Activated CD4-positive, alpha-beta memory T cell treated with anti-CD3 and anti-CD28 coated beads for 36 hours (primary cell): ENCODE measurements at regions of chr2 and their contacts with region 1.

Region 1: DNA sequence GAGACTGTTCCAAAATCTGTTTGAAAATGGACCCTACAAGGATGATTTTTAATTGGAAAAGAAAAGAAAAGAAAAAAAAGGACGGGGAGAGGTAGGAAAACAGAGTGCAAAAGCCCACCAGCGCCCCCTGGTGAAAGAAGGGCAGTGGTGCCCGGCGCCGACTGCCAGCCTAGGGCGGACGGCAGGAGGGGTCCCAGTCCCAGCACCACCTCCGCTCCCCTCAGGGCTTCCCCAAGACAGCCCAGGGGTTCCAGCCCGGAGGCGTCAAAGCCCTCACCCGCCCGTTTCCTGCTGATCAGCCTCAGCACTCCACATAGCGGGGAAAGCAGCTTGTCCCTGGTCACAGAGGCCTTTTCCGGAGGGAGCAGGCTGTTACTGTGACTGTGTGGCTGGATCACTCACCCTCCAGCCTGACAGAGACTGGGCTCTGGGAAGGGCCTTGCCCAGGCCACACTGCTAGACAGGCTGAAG is 213.9 kb downstream of the TFCP2L1 start:
- DNase-seq: peak; percentile 64
- H3K4me3 Mint-ChIP-seq: no peak overlapping the region
- H3K27ac Mint-ChIP-seq: no peak overlapping the region
- H3K4me1 Mint-ChIP-seq: peaks cover 2% of the 10 kb centered on the region
- H3K27me3 Mint-ChIP-seq: peaks cover 7% of the 10 kb centered on the region

Region 2: DNA sequence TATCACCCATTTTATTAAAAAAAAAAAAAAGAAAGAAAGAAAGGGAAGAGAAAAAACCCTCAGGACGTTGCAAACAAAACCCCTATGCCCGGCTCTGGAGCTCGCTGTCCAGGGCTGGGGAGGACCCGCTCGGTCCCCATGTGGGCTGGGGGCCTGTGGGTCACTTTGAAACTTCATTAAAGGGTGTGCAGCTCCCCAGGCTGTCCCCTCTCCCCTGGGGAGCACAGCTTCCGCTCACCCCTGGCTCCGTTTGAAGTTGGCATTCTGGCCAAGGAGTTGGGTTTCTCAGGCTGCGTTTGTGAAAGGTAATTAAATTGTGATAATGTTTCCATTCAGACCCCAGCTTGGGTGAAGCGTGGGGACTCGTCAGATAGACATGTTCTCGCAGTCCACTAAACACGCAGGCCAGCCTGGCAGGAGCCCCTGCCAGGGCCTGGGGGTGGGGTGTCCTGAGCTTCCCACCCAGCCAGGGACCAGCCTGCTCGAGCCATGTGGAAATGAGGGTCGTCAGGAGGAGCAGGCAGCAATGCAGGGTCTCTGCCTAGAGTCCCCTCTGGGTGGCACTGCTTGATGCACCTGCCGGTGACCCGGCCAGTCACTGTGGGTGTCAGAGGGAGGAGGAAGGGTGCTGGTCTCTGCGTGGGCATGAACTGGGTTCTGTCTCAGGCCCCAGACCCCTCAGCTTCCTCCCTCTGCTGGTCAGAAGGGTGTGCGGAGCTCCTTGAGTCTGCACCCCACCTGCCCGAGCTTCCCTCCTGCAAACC is 558.9 kb before region 1 on chr2:
- CTCF ChIA-PET with region 1: no interaction called
- POLR2A ChIA-PET with region 1: no interaction called
- intact Hi-C with region 1: no loop called
- DNase-seq: no peak
- H3K4me3 Mint-ChIP-seq: no peak overlapping the region
- H3K27ac Mint-ChIP-seq: no peak overlapping the region
- H3K4me1 Mint-ChIP-seq: no peaks in the 10 kb centered on the region
- H3K27me3 Mint-ChIP-seq: peaks cover 5% of the 10 kb centered on the region

Region 3: GRCh38 chr2:120735746-120736170 is 335.3 kb before region 1 on chr2 and contains the start of gene GLI2:
- CTCF ChIA-PET with region 1: no interaction called
- POLR2A ChIA-PET with region 1: no interaction called
- intact Hi-C with region 1: loop called (anchors 5 kb)
- DNase-seq: peak; percentile 54
- H3K4me3 Mint-ChIP-seq: no peak within 1 kb of the TSS
- H3K27ac Mint-ChIP-seq: no peak within 1 kb of the TSS
- H3K4me1 Mint-ChIP-seq: peaks cover 6% of the 10 kb centered on the region
- H3K27me3 Mint-ChIP-seq: peaks cover 53% of the 10 kb centered on the region
- total RNA-seq, gene GLI2: not detected

Region 4: DNA sequence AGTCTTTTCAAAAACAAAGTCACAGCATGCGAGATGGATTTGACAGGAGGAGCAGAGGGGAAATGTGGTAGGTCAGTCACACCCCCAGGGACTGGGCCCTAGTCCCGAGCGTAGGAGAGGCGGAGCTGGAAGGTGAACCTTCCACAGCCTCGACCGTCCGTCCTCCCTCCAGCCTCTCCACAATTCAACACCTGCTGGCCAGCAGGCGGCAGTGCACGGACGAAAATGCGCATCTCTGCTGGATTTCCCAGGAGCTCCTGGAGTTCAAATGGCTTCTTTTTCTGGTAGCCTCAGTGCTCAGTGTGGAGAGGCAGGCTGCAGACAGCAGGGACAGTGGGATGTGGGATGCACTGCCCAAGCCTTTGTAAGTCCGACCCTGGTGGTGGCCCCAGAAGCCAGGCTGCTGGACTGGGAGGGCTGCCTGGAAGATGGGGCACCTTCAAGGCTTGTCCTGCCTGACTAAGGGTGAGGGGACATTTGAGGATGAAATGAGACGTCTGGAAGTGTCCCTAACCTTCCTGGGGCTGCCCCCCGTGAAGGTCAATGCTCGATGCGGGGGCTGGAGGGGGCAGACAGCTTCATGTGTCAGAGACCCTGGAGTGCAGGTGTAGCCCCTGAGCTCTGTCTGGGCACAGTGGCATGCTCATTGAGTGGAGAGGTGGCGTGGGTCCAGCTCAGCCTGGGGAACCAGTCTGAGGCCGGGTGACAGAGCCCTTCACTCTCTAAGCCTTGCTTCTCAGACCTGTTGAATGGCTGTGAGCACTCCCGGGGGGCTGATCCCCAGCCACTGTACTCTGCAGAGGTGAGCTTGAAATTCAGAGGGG is 24.4 kb after region 1 on chr2:
- CTCF ChIA-PET with region 1: no interaction called
- POLR2A ChIA-PET with region 1: no interaction called
- intact Hi-C with region 1: no loop called
- DNase-seq: peak; percentile 47
- H3K4me3 Mint-ChIP-seq: no peak overlapping the region
- H3K27ac Mint-ChIP-seq: no peak overlapping the region
- H3K4me1 Mint-ChIP-seq: no peaks in the 10 kb centered on the region
- H3K27me3 Mint-ChIP-seq: peaks cover 5% of the 10 kb centered on the region